ENCODE measurements at regions of chr14 and their contacts with region 1.

Region 1: GRCh38 chr14:54955143-54955542 is 52.5 kb upstream of the GCH1 start:
- DNase-seq: no peak
- H3K4me3 ChIP-seq: no peak overlapping the region
- H3K27ac ChIP-seq: no peak overlapping the region
- H3K4me1 ChIP-seq: no peaks in the 10 kb centered on the region
- H3K27me3 ChIP-seq: no peaks in the 10 kb centered on the region
- CTCF ChIP-seq: no peak
- EP300 ChIP-seq: no peak
- POLR2A ChIP-seq: no peak

Region 2: DNA sequence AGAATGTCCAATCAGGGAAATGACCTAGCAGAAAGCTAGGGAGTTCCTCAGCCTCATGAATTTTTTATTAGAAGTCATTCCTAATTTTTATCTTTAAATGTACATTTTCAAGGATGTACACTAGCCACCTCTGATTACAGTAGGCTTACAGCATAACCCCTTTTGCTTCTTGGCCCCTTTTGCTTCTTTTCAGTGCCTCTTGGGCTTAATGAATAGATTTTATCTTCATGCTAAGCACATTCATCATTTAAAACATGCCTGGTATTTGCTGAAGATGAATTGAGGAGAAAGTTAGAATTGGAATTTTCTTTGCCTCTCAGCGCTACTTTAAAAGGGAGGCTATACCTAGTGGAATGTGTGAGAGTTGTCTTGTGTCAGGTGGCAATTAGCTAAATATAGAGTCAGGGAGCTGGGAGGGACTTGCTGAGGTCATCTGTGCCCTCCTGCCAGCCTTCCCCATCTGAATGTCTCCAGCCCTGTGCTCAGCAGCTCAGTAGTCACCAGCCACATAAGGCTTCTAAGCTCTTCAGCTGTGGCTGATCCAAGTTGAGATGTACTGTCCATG is 256.1 kb before region 1 on chr14:
- in situ Hi-C with region 1: no loop called
- intact Hi-C with region 1: no loop called
- DNase-seq: no peak
- H3K4me3 ChIP-seq: no peak overlapping the region
- H3K27ac ChIP-seq: peak overlapping the region; percentile 10 to 60 (median 50)
- H3K4me1 ChIP-seq: peaks cover 5 to 17% (median 8%) of the 10 kb centered on the region in 4 donors
- H3K27me3 ChIP-seq: no peaks in the 10 kb centered on the region
- CTCF ChIP-seq: no peak
- EP300 ChIP-seq: no peak
- POLR2A ChIP-seq: no peak

Region 3: GRCh38 chr14:54981698-54982097 is 26.6 kb after region 1 on chr14:
- in situ Hi-C with region 1: no loop called
- intact Hi-C with region 1: loop called (anchors 1 kb)
- DNase-seq: no peak
- H3K4me3 ChIP-seq: no peak overlapping the region
- H3K27ac ChIP-seq: no peak overlapping the region
- H3K4me1 ChIP-seq: no peaks in the 10 kb centered on the region
- H3K27me3 ChIP-seq: no peaks in the 10 kb centered on the region
- CTCF ChIP-seq: peak in 4 of 5 experiments; percentile 11 to 32 (median 20)
- EP300 ChIP-seq: no peak
- POLR2A ChIP-seq: no peak